Activated naive CD4-positive, alpha-beta T cell treated with anti-CD3 and anti-CD28 coated beads for 36 hours (primary cell): ENCODE measurements at regions of chr21 and their contacts with region 1.

Region 1: GRCh38 chr21:35084869-35085268 is 35.8 kb upstream of the RUNX1 start:
- DNase-seq: no peak
- H3K4me3 Mint-ChIP-seq: no peak overlapping the region
- H3K27ac Mint-ChIP-seq: no peak overlapping the region
- H3K4me1 Mint-ChIP-seq: peaks cover 32% of the 10 kb centered on the region
- H3K27me3 Mint-ChIP-seq: peaks cover 3% of the 10 kb centered on the region

Region 2: GRCh38 chr21:34933609-34934335 is 151.1 kb before region 1 on chr21:
- CTCF ChIA-PET with region 1: no interaction called
- intact Hi-C with region 1: loop called (anchors 5 kb)
- DNase-seq: peak; percentile 51
- H3K4me3 Mint-ChIP-seq: peak overlapping the region; percentile 77
- H3K27ac Mint-ChIP-seq: peak overlapping the region; percentile 97
- H3K4me1 Mint-ChIP-seq: peaks cover 80% of the 10 kb centered on the region
- H3K27me3 Mint-ChIP-seq: no peaks in the 10 kb centered on the region

Region 3: GRCh38 chr21:35020902-35021301 is 64.0 kb before region 1 on chr21:
- CTCF ChIA-PET with region 1: no interaction called
- intact Hi-C with region 1: loop called (anchors 1 kb)
- DNase-seq: peak; percentile 52
- H3K4me3 Mint-ChIP-seq: no peak overlapping the region
- H3K27ac Mint-ChIP-seq: peak overlapping the region; percentile 80
- H3K4me1 Mint-ChIP-seq: peaks cover 89% of the 10 kb centered on the region
- H3K27me3 Mint-ChIP-seq: no peaks in the 10 kb centered on the region

Region 4: GRCh38 chr21:35113064-35113463 is 28.2 kb after region 1 on chr21:
- CTCF ChIA-PET with region 1: no interaction called
- intact Hi-C with region 1: no loop called
- DNase-seq: peak; percentile 52
- H3K4me3 Mint-ChIP-seq: no peak overlapping the region
- H3K27ac Mint-ChIP-seq: peak overlapping the region; percentile 47
- H3K4me1 Mint-ChIP-seq: peaks cover 18% of the 10 kb centered on the region
- H3K27me3 Mint-ChIP-seq: no peaks in the 10 kb centered on the region

Region 5: DNA sequence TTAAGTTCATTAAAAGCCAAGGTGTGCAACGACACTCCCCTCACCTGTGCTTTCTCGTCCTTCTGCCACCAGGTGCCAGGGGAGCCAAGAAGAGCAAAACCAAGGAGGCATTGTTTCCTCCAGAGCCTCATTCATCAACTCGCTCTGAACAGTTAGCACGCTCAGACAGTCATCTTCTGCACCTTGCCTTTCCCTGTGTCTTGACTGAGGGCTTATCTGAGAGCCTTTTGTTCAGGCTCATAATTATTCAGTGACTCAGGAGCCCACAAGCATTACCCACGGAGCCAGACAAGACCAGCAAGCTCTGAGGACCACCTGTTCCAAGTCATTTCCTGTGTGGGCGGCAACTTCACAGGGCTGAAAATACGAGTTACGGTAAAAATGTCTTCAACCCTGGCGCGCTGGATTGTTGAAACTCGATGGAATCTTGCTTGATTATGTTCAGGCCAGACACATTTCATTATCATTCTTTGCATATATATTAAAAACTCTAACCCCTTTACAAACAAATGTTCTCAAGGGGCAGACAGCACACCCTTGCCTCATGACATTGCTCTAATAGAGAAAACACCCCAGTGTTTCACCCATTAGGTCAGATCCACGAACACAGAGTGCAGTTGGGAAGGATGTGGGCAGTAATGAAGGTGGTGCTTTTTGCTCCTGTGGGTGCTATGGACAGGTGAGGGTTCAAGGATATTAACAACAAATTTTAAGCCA is 54.0 kb after region 1 on chr21:
- CTCF ChIA-PET with region 1: no interaction called
- intact Hi-C with region 1: loop called (anchors 1 kb)
- DNase-seq: peak; percentile 87
- H3K4me3 Mint-ChIP-seq: peak overlapping the region; percentile 70
- H3K27ac Mint-ChIP-seq: peak overlapping the region; percentile 95
- H3K4me1 Mint-ChIP-seq: peaks cover 38% of the 10 kb centered on the region
- H3K27me3 Mint-ChIP-seq: no peaks in the 10 kb centered on the region

Region 6: DNA sequence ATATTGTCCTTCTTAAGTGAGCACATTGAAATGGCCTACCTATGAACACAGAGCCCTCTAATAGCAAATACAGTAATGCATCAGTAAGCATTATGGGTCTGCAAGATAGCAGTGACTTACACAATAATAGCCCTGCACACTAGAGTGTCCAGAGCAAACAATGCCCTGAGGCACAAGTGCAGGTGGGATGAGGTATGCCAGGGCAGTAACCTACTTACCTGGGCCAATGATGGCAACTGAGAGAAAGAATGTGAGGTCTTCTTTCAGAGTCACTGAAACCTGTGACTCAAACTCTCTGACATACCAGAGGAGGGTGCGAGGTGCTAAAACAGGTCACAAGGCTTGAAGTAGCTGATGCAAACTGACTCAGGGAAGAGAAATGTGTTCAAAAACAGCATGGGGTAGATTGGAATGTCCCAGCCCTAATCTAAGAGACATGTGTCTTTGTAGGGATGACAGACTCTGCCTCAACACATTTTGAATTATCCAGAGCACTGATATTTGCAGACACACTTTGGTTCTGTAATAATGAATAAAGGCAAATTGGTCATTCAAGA is 132.7 kb after region 1 on chr21:
- CTCF ChIA-PET with region 1: no interaction called
- intact Hi-C with region 1: loop called (anchors 1 kb)
- DNase-seq: peak; percentile 82
- H3K4me3 Mint-ChIP-seq: no peak overlapping the region
- H3K27ac Mint-ChIP-seq: peak overlapping the region; percentile 82
- H3K4me1 Mint-ChIP-seq: peaks cover 32% of the 10 kb centered on the region
- H3K27me3 Mint-ChIP-seq: no peaks in the 10 kb centered on the region

Region 7: GRCh38 chr21:35342440-35342839 is 257.6 kb after region 1 on chr21:
- CTCF ChIA-PET with region 1: no interaction called
- intact Hi-C with region 1: loop called (anchors 1 kb)
- DNase-seq: peak; percentile 68
- H3K4me3 Mint-ChIP-seq: peak overlapping the region; percentile 39
- H3K27ac Mint-ChIP-seq: peak overlapping the region; percentile 93
- H3K4me1 Mint-ChIP-seq: peaks cover 42% of the 10 kb centered on the region
- H3K27me3 Mint-ChIP-seq: peaks cover 4% of the 10 kb centered on the region